Heart left ventricle (tissue), 16 donors: ENCODE measurements at regions of chr2 and their contacts with region 1.

Region 1: DNA sequence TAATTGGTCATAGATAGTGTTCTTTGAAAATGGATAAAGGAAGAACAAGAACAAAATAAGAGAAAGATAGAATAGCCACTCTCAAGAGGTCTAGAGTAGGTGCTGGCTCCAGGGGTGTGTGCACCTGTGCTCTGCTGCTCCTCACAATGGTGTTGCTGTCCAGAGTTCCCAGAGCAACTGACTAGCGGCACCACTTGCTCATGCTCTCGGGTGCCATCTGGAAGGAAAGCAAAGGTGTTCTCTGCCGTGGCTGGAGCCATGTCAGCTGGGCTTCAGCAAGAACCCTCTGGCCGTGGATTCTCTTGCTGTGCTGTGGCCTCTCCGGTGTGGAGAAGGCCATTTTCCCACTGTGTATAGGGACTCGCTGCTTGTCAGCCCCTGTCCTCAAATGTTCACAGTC is 114.7 kb upstream of the TEX51 start:
- DNase-seq: no peak
- ATAC-seq: no peak
- H3K4me3 ChIP-seq: no peak overlapping the region
- H3K27ac ChIP-seq: no peak overlapping the region
- H3K4me1 ChIP-seq: no peaks in the 10 kb centered on the region
- H3K27me3 ChIP-seq: peaks cover 0 to 25% (median 2%) of the 10 kb centered on the region in 9 donors
- CTCF ChIP-seq: no peak
- POLR2A ChIP-seq: no peak

Region 2: DNA sequence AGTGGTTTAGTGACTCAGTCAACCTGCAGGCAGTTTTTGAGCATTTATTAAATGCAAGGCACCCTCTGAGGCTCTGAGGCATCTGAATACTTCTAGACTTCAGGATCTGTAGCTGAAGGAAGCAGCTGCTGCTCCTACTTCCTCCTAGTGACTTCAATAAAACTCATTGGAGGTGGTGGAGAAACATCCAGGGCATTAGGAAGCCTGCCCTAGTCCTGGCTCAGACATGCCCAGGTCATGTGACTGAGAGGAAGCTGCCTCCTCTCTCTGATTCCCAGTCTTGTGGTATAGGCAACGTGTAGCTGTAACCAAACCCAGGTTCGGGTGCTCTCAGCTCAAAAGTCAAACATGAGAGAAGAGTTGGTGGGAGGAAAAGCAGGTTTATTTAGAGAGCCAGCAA is 415.3 kb before region 1 on chr2:
- intact Hi-C with region 1: loop called in 3 of 10 experiments (anchors 5 to 10 kb)
- DNase-seq: peak in 2 of 5 donors; percentile 23 to 29
- ATAC-seq: peak in 3 of 4 donors; percentile 31 to 61 (median 42)
- H3K4me3 ChIP-seq: no peak overlapping the region
- H3K27ac ChIP-seq: no peak overlapping the region
- H3K4me1 ChIP-seq: peaks cover 0 to 18% (median 3%) of the 10 kb centered on the region in 12 donors
- H3K27me3 ChIP-seq: no peaks in the 10 kb centered on the region
- CTCF ChIP-seq: no peak
- POLR2A ChIP-seq: no peak

Region 3: GRCh38 chr2:126686841-126687485 is 97.1 kb before region 1 on chr2:
- intact Hi-C with region 1: no loop called
- DNase-seq: no peak
- ATAC-seq: peak in 1 of 4 donors; percentile 19
- H3K4me3 ChIP-seq: no peak overlapping the region
- H3K27ac ChIP-seq: peak overlapping the region in 8 of 12 donors; percentile 0 to 68 (median 32)
- H3K4me1 ChIP-seq: peaks cover 0 to 46% (median 15%) of the 10 kb centered on the region in 12 donors
- H3K27me3 ChIP-seq: no peaks in the 10 kb centered on the region
- CTCF ChIP-seq: no peak
- POLR2A ChIP-seq: no peak

Region 4: GRCh38 chr2:126761981-126762878 is 21.8 kb before region 1 on chr2:
- intact Hi-C with region 1: no loop called
- DNase-seq: no peak
- ATAC-seq: no peak
- H3K4me3 ChIP-seq: no peak overlapping the region
- H3K27ac ChIP-seq: peak overlapping the region in 1 of 12 donors; percentile 42
- H3K4me1 ChIP-seq: no peaks in the 10 kb centered on the region
- H3K27me3 ChIP-seq: no peaks in the 10 kb centered on the region
- CTCF ChIP-seq: no peak
- POLR2A ChIP-seq: no peak

Region 5: DNA sequence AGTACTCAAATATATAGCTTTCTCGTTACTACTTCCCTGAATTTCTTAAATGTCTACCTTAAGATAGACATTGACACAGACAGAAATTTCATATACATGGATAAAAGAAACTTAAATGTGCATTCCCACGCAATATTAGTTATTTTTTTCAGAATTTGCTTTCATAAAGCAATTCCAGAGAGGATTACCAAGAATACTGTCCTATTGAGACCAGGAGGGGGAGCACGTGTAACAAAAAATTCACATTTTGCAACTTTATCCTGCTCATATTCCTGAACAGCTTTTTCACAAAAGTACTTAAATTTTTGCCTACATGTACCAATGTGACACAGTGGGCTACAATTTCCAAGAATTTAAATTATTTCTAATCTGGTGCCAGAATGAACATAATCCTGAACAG is 540.6 kb after region 1 on chr2:
- intact Hi-C with region 1: no loop called
- DNase-seq: no peak
- ATAC-seq: peak in 1 of 4 donors; percentile 47
- H3K4me3 ChIP-seq: no peak overlapping the region
- H3K27ac ChIP-seq: no peak overlapping the region
- H3K4me1 ChIP-seq: no peaks in the 10 kb centered on the region
- H3K27me3 ChIP-seq: no peaks in the 10 kb centered on the region
- CTCF ChIP-seq: peak; percentile 28 to 69 (median 58)
- POLR2A ChIP-seq: no peak